ENCODE measurements at regions of chr14 and their contacts with region 1.

Region 1: DNA sequence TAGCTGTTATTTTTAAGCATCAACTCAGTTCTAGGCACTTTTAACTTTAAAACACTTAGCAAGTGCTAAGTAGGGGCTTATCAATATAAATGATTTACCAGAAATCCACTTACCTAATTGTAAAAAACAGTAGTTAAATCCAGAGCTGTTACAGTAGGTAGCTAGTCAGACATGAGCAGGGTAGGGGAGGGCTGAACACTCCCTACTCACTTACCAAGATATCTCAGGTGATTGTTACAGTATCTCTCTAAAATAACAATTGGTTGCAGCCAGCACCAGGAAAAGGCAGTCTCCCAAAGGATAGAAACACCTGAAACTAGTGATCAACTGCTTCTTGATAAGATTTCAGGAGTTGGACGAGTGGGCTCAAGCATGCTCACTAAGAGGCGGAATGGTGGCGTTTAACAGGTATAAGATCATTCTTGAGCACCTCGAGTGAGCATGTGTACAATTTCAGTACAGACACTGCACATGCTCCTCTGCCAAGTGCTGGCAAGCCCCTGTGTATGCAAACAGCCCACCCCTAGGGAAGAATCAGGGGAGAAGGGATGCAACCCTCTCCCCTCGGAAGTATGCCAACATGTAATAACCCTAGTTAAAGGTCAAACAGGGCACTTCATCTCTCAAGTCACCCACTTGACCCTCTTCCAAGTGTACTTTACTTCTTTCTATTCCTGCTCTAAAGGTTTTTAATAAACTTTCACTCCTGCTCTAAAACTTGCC is 1113.6 kb upstream of the SEL1L start:
- DNase-seq: no peak
- H3K4me3 ChIP-seq: no peak overlapping the region
- H3K27ac ChIP-seq: no peak overlapping the region
- H3K4me1 ChIP-seq: no peaks in the 10 kb centered on the region
- H3K27me3 ChIP-seq: no peaks in the 10 kb centered on the region
- CTCF ChIP-seq: no peak

Region 2: DNA sequence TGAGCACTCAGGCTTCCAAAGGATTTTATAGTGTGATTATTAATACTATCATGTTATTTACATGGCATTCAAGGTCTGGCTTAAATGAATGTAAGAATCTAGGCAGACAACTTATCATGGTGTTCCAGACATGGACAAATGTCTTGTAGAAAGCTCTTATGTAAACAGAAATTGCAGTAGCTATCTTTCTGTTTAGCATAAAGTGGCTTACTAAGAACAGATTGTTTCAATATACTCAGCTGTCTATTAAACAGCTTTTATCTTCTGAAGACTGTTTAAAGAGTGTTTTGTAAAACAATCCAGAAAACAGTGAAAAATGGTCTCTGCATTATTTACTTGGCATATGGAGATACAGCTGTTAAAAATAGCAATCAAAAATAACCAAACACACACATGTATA is 51.8 kb before region 1 on chr14:
- intact Hi-C with region 1: loop called (anchors 2 kb)
- DNase-seq: no peak
- H3K4me3 ChIP-seq: no peak overlapping the region
- H3K27ac ChIP-seq: no peak overlapping the region
- H3K4me1 ChIP-seq: no peaks in the 10 kb centered on the region
- H3K27me3 ChIP-seq: no peaks in the 10 kb centered on the region
- CTCF ChIP-seq: no peak